Psoas muscle (tissue), 8 donors: ENCODE measurements at regions of chr9 and their contacts with region 1.

Region 1: GRCh38 chr9:96646081-96646991 is 8.8 kb downstream of the PRXL2C start:
- DNase-seq: peak; percentile 62 to 77
- ATAC-seq: peak; percentile 80 to 91 (median 88)
- H3K4me3 ChIP-seq: peak overlapping the region; percentile 39
- H3K27ac ChIP-seq: peak overlapping the region; percentile 89
- H3K4me1 ChIP-seq: peaks cover 49% of the 10 kb centered on the region
- H3K27me3 ChIP-seq: no peaks in the 10 kb centered on the region
- CTCF ChIP-seq: no peak

Region 2: DNA sequence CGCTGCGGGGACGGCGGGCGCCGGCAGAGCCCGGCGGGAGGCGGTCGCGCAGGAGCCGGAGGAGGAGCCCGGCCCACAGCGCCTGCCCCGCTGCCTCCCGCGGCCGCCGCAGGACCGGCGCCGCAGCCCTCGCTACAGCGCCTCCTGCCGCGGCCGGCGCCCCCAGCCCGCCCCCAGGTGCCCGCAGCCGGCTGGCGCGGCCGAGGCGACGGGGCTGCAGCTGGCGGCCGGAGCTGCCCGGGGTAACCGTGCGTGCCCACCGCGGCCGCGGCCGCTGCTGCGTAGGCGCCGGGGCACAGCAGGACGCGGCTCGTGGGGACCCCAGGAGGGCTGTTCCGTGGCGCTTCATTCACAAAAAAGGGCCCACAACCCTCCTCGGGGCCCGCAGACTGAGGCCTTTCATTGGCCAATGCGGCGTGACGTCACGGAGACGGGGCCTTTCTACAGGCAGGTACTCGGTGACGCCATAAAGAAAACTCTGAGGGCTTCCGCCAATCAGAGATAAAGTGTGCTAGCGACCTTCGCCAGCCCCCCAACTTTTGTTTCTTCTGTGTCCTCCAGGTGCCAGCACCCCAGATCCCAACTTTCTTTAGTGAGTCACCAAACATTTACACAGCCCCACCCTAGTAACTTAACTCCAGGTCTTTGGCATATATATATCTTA is 26.7 kb before region 1 on chr9 and contains the start of gene CDC14B:
- intact Hi-C with region 1: loop called (anchors 2 to 5 kb)
- DNase-seq: peak; percentile 79 to 84
- ATAC-seq: peak; percentile 35 to 57 (median 44)
- H3K4me3 ChIP-seq: peak within 1 kb of the TSS; percentile 83
- H3K27ac ChIP-seq: peak within 1 kb of the TSS; percentile 94
- H3K4me1 ChIP-seq: no peaks in the 10 kb centered on the region
- H3K27me3 ChIP-seq: no peaks in the 10 kb centered on the region
- CTCF ChIP-seq: peak; percentile 9
- total RNA-seq, gene CDC14B: 2.1 to 10.7 (median 6.1) TPM